Activated CD4-positive, alpha-beta memory T cell treated with anti-CD3 and anti-CD28 coated beads for 36 hours (primary cell): ENCODE measurements at regions of chr21 and their contacts with region 1.

Region 1: GRCh38 chr21:34526618-34527290 is 14.7 kb upstream of the KCNE1 start:
- DNase-seq: peak; percentile 66
- H3K4me3 Mint-ChIP-seq: peak overlapping the region; percentile 59
- H3K27ac Mint-ChIP-seq: peak overlapping the region; percentile 76
- H3K4me1 Mint-ChIP-seq: peaks cover 22% of the 10 kb centered on the region
- H3K27me3 Mint-ChIP-seq: no peaks in the 10 kb centered on the region

Region 2: GRCh38 chr21:34372321-34372720 is 154.4 kb before region 1 on chr21:
- CTCF ChIA-PET with region 1: no interaction called
- POLR2A ChIA-PET with region 1: no interaction called
- intact Hi-C with region 1: no loop called
- DNase-seq: no peak
- H3K4me3 Mint-ChIP-seq: no peak overlapping the region
- H3K27ac Mint-ChIP-seq: no peak overlapping the region
- H3K4me1 Mint-ChIP-seq: no peaks in the 10 kb centered on the region
- H3K27me3 Mint-ChIP-seq: peaks cover 8% of the 10 kb centered on the region

Region 3: GRCh38 chr21:34545079-34545884 is 18.5 kb after region 1 on chr21:
- CTCF ChIA-PET with region 1: interaction called, 14 read pairs
- POLR2A ChIA-PET with region 1: no interaction called
- intact Hi-C with region 1: loop called (anchors 2 kb)
- DNase-seq: peak; percentile 40
- H3K4me3 Mint-ChIP-seq: no peak overlapping the region
- H3K27ac Mint-ChIP-seq: peak overlapping the region; percentile 67
- H3K4me1 Mint-ChIP-seq: peaks cover 15% of the 10 kb centered on the region
- H3K27me3 Mint-ChIP-seq: no peaks in the 10 kb centered on the region

Region 4: DNA sequence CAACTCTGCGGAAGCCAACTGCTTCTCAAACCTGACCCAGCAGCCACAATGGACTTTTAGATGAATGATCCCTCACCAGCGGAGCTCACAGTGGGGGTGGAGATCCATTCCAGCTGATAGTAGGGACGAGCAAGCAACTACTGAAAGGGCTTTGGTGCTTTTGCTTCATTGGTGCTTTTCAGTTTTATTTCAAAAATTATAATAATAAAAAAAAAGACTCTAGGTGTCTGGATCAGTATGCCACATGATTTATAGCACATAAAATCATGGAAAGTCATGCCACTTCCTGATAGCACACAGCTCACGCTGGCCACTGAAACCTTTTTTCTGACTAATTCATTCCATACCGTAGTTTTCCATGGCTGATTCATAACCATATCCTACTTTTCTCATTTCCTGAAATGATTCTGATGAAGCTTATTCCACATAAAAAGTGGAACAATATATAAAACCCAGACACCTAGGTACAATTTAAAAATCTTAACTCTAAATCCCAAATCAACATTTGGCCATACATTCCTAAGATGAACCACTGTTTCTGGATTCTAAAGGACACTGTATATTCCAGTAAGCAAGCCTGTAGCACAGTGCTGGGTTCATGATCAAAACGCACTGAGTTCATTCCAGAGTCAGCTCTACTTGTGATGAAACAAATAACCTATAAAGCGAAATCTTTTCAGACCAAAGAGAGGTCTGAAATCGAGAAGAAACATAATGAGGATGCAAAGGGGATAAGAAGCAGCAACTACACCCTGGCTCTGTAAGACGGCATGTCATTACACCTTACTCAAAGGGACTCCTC is 26.6 kb after region 1 on chr21:
- CTCF ChIA-PET with region 1: no interaction called
- POLR2A ChIA-PET with region 1: interaction called, 4 read pairs
- intact Hi-C with region 1: loop called (anchors 2 kb)
- DNase-seq: no peak
- H3K4me3 Mint-ChIP-seq: no peak overlapping the region
- H3K27ac Mint-ChIP-seq: no peak overlapping the region
- H3K4me1 Mint-ChIP-seq: peaks cover 14% of the 10 kb centered on the region
- H3K27me3 Mint-ChIP-seq: no peaks in the 10 kb centered on the region